GM23248 (cell line): ENCODE measurements at regions of chr3 and their contacts with region 1.

Region 1: DNA sequence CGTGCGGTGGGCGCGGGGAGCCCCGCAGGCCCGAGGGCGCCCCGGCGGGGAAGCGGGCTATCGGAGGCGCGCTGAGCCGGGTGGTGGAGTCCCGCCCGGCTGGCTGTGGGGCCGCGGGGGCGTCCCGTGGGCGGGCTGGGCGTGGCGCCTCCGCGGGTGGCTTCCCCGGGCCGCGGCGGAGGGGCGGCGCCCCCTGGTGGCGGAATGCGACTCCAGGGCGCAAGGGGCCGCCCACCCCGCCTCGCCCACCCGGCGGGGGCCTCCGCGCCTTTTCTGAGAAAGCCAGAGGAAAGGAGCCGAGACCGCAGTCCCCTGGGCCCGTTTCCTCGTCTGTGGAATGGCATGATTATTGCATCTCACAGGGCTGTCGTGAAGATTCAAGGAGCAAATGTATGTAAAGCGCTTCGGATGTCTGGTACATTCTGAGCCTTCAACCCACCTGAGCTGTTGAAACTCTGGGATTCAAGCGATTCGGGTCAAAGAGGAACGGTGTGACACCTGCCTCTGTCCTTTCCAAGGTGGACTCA is 31.9 kb upstream of the RAB6B start:
- DNase-seq: peak; percentile 65
- H3K4me3 ChIP-seq: peak overlapping the region; percentile 66
- H3K27ac ChIP-seq: no peak overlapping the region
- H3K4me1 ChIP-seq: 0 out of 2 replicates have a peak, but pooled peaks cover 8% of the 10 kb centered on the region
- H3K27me3 ChIP-seq: no peaks in the 10 kb centered on the region

Region 2: GRCh38 chr3:133821767-133822638 is 105.6 kb before region 1 on chr3:
- in situ Hi-C with region 1: loop called (anchors 5 kb)
- DNase-seq: peak; percentile 79
- H3K4me3 ChIP-seq: no peak overlapping the region
- H3K27ac ChIP-seq: no peak overlapping the region
- H3K4me1 ChIP-seq: peaks cover 4% of the 10 kb centered on the region; the same call in 1 of the 2 replicates
- H3K27me3 ChIP-seq: no peaks in the 10 kb centered on the region

Region 3: GRCh38 chr3:134197681-134198261 is 270.2 kb after region 1 on chr3:
- in situ Hi-C with region 1: loop called (anchors 10 kb)
- DNase-seq: peak; percentile 83
- H3K4me3 ChIP-seq: no peak overlapping the region
- H3K27ac ChIP-seq: no peak overlapping the region
- H3K4me1 ChIP-seq: peaks cover 36% of the 10 kb centered on the region
- H3K27me3 ChIP-seq: no peaks in the 10 kb centered on the region

Region 4: GRCh38 chr3:134485718-134486576 is 558.3 kb after region 1 on chr3 and contains the starts of genes ANAPC13 and CEP63:
- in situ Hi-C with region 1: loop called (anchors 25 kb)
- DNase-seq: peak; percentile 99
- H3K4me3 ChIP-seq: peak within 1 kb of the TSS; percentile 89
- H3K27ac ChIP-seq: peak within 1 kb of the TSS; percentile 98
- H3K4me1 ChIP-seq: peaks cover 50% of the 10 kb centered on the region
- H3K27me3 ChIP-seq: no peaks in the 10 kb centered on the region
- total RNA-seq, gene ANAPC13: 93.5 and 108 TPM in 2 replicates
- total RNA-seq, gene CEP63: 12.6 and 21.0 TPM in 2 replicates